T-cell (primary cell): ENCODE measurements at regions of chr4 and their contacts with region 1.

Region 1: DNA sequence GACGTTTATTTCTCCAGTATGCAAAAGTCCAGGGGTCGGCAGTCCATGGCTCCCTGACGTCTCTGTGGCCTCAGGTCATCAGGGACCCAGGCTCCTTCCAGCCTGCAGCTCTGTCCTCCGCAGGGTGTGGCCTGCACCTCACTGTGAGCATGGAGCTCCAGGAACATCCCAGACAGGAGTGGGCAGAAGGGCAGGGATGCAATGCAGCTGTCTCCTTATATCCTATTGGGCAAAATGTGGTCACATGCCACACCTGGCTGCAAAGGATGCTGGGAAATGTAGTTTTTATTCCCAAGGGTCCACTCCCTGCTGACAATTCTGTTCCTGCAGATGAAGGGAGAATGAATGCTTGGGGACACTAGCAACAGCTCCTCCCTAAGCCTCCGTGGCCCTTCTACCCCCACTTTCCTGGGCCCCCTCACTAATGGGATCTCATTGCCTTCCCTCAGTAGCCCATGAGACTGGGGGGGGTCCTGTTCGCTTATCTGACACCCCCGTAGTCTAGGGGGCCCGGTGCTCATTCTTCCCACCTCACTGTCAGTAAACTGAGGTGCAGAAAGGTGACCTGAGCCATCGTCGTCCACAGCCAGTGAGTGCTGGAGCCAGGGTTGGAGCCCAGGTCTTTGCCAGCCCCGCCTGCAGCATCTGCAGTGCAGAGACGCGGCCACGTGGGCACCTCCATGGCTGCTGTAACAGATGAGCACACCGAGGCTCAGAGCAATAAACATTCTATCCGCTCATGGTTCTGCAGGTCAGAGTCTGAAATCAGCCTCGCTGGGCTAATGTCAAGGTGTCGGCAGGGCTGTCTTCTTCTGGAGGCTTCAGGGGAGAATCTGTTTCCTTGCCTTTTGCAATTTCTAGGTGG is 5.9 kb upstream of the GRPEL1 start:
- DNase-seq: peak in 1 of 35 experiments; percentile 50
- ATAC-seq: peak in 1 of 4 experiments; percentile 24
- H3K4me3 ChIP-seq: no peak overlapping the region
- H3K4me3 Mint-ChIP-seq: no peak overlapping the region
- H3K27ac ChIP-seq: no peak overlapping the region
- H3K27ac Mint-ChIP-seq: no peak overlapping the region
- H3K4me1 ChIP-seq: peaks cover 2 to 12% of the 10 kb centered on the region in 2 experiments
- H3K4me1 Mint-ChIP-seq: peaks cover 9 to 13% (median 11%) of the 10 kb centered on the region in 3 donors
- H3K27me3 ChIP-seq: peaks cover 0 to 17% of the 10 kb centered on the region in 2 experiments
- H3K27me3 Mint-ChIP-seq: peaks cover 0 to 5% of the 10 kb centered on the region in 2 donors

Region 2: GRCh38 chr4:7238300-7238960 is 164.7 kb after region 1 on chr4:
- CTCF ChIA-PET with region 1: no interaction called
- POLR2A ChIA-PET with region 1: no interaction called
- DNase-seq: peak in 1 of 35 experiments; percentile 3
- ATAC-seq: no peak
- H3K4me3 ChIP-seq: no peak overlapping the region
- H3K4me3 Mint-ChIP-seq: no peak overlapping the region
- H3K27ac ChIP-seq: no peak overlapping the region
- H3K27ac Mint-ChIP-seq: no peak overlapping the region
- H3K4me1 ChIP-seq: no peaks in the 10 kb centered on the region
- H3K4me1 Mint-ChIP-seq: no peaks in the 10 kb centered on the region
- H3K27me3 ChIP-seq: peaks cover 0 to 27% of the 10 kb centered on the region in 2 experiments
- H3K27me3 Mint-ChIP-seq: peaks cover 3 to 11% of the 10 kb centered on the region in 2 donors

Region 3: DNA sequence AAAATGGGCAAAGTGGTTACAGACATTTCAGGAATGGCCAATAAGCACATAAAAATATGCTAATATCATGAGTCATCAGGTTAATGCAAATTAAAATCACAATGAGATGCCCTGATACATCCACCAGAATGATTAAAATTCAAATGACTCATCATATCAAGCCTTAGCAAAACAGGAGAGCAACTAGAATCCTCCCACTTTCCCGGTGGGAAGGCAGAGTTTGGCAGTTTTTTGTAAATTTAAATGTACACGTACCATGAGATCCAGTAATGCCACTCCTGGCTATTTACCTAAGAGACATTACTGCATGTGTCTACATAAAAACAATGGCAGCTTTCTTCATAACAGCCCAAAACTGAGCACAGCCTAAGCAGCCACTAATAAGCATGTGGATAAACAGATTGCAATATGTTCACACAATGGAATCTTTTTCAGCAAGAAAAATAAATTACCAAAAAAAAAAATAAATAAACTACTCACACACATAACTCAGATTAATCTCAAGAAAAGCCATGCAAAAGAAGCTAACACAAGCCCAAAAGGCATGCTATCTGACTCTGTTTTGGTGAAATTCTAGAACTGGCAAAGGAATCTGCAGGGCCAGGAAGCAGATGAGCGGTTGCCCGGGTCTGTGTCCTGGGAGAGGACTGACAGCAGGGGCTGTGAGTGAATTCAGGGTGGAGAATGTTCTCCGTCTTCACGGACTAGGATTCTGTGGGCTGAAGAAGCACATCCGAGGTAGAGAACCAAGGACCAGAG is 817.1 kb after region 1 on chr4:
- CTCF ChIA-PET with region 1: interaction called in 1 of 2 experiments, 11 read pairs
- POLR2A ChIA-PET with region 1: no interaction called
- DNase-seq: no peak
- ATAC-seq: no peak
- H3K4me3 ChIP-seq: no peak overlapping the region
- H3K4me3 Mint-ChIP-seq: no peak overlapping the region
- H3K27ac ChIP-seq: no peak overlapping the region
- H3K27ac Mint-ChIP-seq: peak overlapping the region in 1 of 2 donors; percentile 1
- H3K4me1 ChIP-seq: no peaks in the 10 kb centered on the region
- H3K4me1 Mint-ChIP-seq: peaks cover 0 to 20% (median 11%) of the 10 kb centered on the region in 3 donors
- H3K27me3 ChIP-seq: peaks cover 0 to 3% of the 10 kb centered on the region in 2 experiments
- H3K27me3 Mint-ChIP-seq: no peaks in the 10 kb centered on the region